ENCODE measurements at regions of chr17 and their contacts with region 1.

Region 1: GRCh38 chr17:58710936-58711775 is 18.8 kb downstream of the RAD51C start:
- DNase-seq: peak; percentile 32
- ATAC-seq: no peak

Region 2: GRCh38 chr17:59004338-59005111 is 293.4 kb after region 1 on chr17:
- intact Hi-C with region 1: loop called (anchors 2 to 5 kb)
- DNase-seq: peak; percentile 53
- ATAC-seq: peak; percentile 68 to 70

Measured in left cardiac atrium (tissue), 4 donors.